Left colon (tissue), 2 donors: ENCODE measurements at regions of chr17 and their contacts with region 1.

Region 1: DNA sequence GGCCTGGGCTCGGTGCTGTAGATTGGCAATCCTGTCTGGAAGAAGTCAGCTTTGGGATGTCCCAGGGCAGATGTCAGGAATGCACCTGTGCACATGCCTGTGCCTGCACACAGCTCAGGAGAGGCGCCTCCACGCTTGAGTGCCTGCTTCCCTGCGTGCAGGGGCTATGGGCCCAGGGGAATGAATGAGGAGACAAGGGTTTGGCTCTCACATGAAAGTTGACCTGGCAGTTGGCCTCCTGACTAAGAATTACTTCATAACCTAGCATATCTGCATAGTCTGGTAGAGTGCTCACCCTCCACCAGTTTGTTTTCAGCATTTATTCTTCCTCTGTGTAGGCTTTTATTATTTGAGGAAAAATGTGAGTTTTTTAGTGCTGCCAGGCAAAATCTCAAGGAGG is 50.0 kb downstream of the PLD6 start:
- DNase-seq: no peak
- ATAC-seq: no peak

Region 2: DNA sequence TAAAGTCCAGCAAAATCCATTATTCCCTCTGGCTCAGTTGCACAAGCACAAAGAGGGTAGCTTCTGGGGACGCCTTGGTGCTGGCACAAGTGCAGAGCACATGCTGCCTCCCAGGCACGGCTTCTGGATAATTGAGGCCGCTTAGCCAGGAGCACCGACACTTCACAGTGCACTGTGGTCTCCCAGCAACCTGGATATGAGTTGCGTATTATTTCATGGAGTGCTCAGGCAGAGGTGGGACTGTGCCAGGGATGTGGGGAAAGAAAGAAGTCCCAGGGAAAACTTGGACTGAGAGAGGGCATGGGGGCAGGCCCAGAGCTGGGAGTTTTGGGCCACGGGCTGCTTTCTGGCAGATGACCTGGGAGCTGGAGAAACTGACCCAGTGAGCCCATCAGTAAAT is 76.4 kb before region 1 on chr17:
- intact Hi-C with region 1: loop called in 1 of 2 experiments (anchors 5 kb)
- DNase-seq: peak in 1 of 2 donors; percentile 27
- ATAC-seq: no peak